Panc1 (cell line): ENCODE measurements at regions of chr9 and their contacts with region 1.

Region 1: DNA sequence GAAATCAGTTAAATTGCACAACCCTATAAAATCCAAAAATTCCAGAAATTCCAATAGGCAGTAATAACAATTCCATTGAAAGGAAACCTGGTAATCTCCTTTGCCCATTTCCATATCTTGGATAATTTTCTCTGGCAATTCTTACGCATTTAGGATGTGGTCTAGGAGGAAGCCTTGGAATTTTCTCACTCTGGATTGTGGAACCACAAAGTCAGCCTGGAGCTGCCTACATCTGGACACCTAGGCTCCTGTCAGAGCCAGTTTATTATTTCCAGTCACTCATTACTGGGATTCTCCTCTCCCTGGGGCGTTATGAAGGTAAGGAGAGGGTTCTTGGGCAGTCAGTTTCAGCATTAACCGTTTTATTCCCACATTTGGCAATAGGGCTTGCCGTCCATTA is 40.3 kb upstream of the GNE start:
- DNase-seq: no peak
- ATAC-seq: no peak
- H3K4me3 ChIP-seq: no peak overlapping the region
- H3K27ac ChIP-seq: peak overlapping the region; percentile 84
- H3K4me1 ChIP-seq: peaks cover 27% of the 10 kb centered on the region
- H3K27me3 ChIP-seq: no peaks in the 10 kb centered on the region
- CTCF ChIP-seq: no peak

Region 2: DNA sequence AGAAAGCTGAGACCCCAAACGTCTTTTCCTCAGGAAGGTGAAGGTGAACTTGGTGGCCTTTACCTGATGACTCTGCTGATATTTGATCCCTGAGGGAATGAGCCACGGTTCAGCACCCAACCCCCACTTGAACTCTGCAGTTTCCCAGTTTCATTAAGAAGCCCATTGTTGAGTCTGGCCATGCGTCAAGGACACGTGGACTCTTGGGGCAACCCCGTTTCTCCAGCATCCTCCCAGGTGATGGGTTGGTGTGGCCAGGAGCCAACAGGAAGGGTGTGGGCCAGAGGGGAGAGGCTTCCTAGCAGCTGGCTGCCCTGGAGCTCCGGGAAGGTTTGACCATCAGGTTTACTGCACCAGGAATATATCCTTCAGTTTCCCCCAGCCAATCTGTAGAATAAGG is 19.2 kb after region 1 on chr9:
- CTCF ChIA-PET with region 1: no interaction called
- POLR2A ChIA-PET with region 1: interaction called, 12 read pairs
- in situ Hi-C with region 1: no loop called
- intact Hi-C with region 1: no loop called
- DNase-seq: no peak
- ATAC-seq: peak; percentile 13
- H3K4me3 ChIP-seq: no peak overlapping the region
- H3K27ac ChIP-seq: peak overlapping the region; percentile 67
- H3K4me1 ChIP-seq: peaks cover 36% of the 10 kb centered on the region
- H3K27me3 ChIP-seq: no peaks in the 10 kb centered on the region
- CTCF ChIP-seq: no peak

Region 3: DNA sequence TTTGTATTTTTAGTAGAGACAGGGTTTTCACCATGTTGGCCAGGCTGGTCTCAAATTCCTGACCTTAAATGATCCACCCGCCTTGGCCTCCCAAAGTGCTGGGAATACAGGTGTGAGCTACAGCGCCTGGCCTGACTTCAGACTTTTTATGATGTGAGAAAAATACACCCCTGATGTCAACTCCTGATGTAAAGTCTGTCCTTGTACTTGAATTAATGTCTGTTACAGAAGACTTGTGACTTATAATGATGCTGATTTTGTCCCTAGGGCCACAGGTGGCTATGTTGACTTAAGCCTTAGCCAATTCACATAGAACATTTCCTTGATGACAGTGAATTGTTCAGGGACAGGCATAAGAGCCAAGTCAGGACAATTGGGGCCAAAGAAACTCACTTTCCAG is 231.6 kb after region 1 on chr9:
- CTCF ChIA-PET with region 1: no interaction called
- POLR2A ChIA-PET with region 1: no interaction called
- in situ Hi-C with region 1: no loop called
- intact Hi-C with region 1: no loop called
- DNase-seq: no peak
- ATAC-seq: no peak
- H3K4me3 ChIP-seq: no peak overlapping the region
- H3K27ac ChIP-seq: no peak overlapping the region
- H3K4me1 ChIP-seq: no peaks in the 10 kb centered on the region
- H3K27me3 ChIP-seq: no peaks in the 10 kb centered on the region
- CTCF ChIP-seq: no peak